ENCODE measurements at regions of chr2 and their contacts with region 1.

Region 1: GRCh38 chr2:205925373-205926337 is 160.3 kb downstream of the INO80D start:
- DNase-seq: peak; percentile 69
- H3K27ac ChIP-seq: no peak overlapping the region
- CTCF ChIP-seq: peak; percentile 92

Region 2: DNA sequence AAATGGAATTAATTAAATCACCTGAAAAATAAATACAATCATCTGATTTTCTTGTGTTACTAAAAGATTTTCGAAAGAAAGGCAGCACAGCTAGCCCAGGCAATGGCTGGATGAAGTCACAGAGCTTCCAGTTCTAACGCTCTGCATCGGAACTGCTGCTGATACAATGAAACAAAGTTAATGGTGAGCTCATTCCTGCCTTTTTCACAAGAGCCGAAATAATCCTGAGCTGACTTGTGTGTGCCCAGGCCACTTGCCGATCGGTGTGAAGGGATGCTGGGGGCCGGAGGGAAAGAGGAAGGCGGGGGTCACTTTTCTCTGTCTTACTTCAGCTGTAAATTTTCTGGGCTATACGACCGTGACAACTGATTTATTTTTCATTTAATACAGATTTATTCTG is 10.8 kb after region 1 on chr2:
- CTCF ChIA-PET with region 1: interaction called, 11 read pairs
- POLR2A ChIA-PET with region 1: no interaction called
- DNase-seq: no peak
- H3K27ac ChIP-seq: no peak overlapping the region
- CTCF ChIP-seq: no peak

Measured in RWPE1 (cell line).